MCF 10A (cell line): ENCODE measurements at regions of chr2 and their contacts with region 1.

Region 1: GRCh38 chr2:7203055-7203467 is 285.8 kb downstream of the RNF144A start:
- DNase-seq: peak; percentile 61
- H3K4me3 Mint-ChIP-seq: no peak overlapping the region
- H3K27ac Mint-ChIP-seq: no peak overlapping the region
- H3K4me1 Mint-ChIP-seq: no peaks in the 10 kb centered on the region
- H3K27me3 Mint-ChIP-seq: no peaks in the 10 kb centered on the region
- CTCF ChIP-seq: peak; percentile 78

Region 2: GRCh38 chr2:6968319-6969100 is 234.6 kb before region 1 on chr2:
- CTCF ChIA-PET with region 1: no interaction called
- POLR2A ChIA-PET with region 1: no interaction called
- intact Hi-C with region 1: no loop called
- DNase-seq: no peak
- H3K4me3 Mint-ChIP-seq: no peak overlapping the region
- H3K27ac Mint-ChIP-seq: no peak overlapping the region
- H3K4me1 Mint-ChIP-seq: no peaks in the 10 kb centered on the region
- H3K27me3 Mint-ChIP-seq: peaks cover 5% of the 10 kb centered on the region
- CTCF ChIP-seq: no peak

Region 3: DNA sequence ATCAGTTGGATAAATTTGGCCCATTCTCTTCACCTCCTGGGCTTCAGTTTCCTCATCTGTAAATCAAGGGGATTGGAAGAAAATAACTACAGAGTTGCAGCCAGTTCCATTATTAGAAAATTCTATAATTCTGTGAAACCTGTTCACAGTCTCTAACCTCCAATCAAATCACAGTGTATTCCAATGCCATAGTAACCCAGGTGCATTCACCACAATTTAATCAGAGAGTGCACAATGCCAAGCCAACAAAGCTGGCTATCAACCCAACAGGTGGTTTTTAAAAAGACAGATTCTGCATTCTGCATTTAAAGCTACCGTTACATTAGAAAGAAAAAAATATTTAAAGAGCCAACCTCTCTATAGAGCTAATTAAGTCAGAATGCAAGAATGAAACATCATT is 22.8 kb after region 1 on chr2:
- CTCF ChIA-PET with region 1: interaction called, 10 read pairs
- POLR2A ChIA-PET with region 1: no interaction called
- intact Hi-C with region 1: no loop called
- DNase-seq: no peak
- H3K4me3 Mint-ChIP-seq: no peak overlapping the region
- H3K27ac Mint-ChIP-seq: no peak overlapping the region
- H3K4me1 Mint-ChIP-seq: no peaks in the 10 kb centered on the region
- H3K27me3 Mint-ChIP-seq: no peaks in the 10 kb centered on the region
- CTCF ChIP-seq: no peak

Region 4: DNA sequence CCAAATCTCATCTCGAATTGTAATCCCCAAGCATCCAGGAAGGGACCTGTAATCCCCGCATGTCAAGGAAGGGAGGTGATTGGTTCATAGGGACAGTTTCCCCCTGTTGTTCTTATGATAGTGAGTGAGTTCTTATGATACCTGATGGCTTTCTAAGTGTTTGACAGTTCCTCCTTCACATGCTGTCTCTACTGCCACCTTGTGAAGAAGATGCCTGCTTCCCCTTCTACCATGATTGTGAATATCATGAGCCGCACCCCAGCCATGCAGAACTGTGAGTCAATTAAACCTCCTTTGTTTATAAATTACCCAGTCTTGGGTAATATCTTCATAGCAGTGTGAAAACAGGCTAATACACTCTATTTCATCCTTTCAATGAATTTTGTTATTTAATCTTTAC is 160.8 kb after region 1 on chr2:
- CTCF ChIA-PET with region 1: no interaction called
- POLR2A ChIA-PET with region 1: no interaction called
- intact Hi-C with region 1: loop called (anchors 1 kb)
- DNase-seq: peak; percentile 42
- H3K4me3 Mint-ChIP-seq: no peak overlapping the region
- H3K27ac Mint-ChIP-seq: no peak overlapping the region
- H3K4me1 Mint-ChIP-seq: no peaks in the 10 kb centered on the region
- H3K27me3 Mint-ChIP-seq: no peaks in the 10 kb centered on the region
- CTCF ChIP-seq: no peak

Region 5: DNA sequence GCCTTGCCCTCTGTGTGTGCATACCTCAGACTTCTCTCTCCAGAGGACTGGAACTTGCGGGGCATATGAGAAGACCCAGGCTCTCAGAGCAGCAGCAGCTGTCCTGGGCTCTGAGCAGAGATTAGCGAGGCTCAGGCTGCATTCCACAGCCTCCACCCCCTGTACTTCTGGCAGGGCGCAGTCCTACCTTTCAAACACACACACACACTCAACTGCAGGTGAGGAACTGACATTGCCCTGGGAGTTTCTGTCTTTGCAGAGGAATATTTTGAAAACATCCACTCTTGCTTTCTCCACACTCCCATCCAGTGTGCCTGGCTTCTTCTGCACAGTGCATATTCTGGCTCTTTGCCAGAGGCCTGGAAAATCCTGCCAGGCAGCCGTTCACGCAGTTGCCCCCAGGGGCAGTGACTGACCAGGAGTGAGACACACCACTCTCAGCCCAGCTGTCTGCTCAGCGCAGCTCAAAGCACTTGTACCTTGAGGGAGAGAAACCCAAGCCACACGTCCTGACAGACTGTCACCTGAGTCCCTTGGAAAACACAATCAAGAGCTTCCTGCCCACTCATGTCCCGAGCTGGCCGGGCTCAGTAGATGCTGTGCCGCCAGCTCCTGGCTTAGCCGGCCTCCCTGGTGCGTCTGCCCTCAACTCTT is 175.0 kb after region 1 on chr2:
- CTCF ChIA-PET with region 1: interaction called, 3 read pairs
- POLR2A ChIA-PET with region 1: no interaction called
- intact Hi-C with region 1: loop called (anchors 5 kb)
- DNase-seq: peak; percentile 57
- H3K4me3 Mint-ChIP-seq: no peak overlapping the region
- H3K27ac Mint-ChIP-seq: no peak overlapping the region
- H3K4me1 Mint-ChIP-seq: no peaks in the 10 kb centered on the region
- H3K27me3 Mint-ChIP-seq: no peaks in the 10 kb centered on the region
- CTCF ChIP-seq: no peak

Region 6: DNA sequence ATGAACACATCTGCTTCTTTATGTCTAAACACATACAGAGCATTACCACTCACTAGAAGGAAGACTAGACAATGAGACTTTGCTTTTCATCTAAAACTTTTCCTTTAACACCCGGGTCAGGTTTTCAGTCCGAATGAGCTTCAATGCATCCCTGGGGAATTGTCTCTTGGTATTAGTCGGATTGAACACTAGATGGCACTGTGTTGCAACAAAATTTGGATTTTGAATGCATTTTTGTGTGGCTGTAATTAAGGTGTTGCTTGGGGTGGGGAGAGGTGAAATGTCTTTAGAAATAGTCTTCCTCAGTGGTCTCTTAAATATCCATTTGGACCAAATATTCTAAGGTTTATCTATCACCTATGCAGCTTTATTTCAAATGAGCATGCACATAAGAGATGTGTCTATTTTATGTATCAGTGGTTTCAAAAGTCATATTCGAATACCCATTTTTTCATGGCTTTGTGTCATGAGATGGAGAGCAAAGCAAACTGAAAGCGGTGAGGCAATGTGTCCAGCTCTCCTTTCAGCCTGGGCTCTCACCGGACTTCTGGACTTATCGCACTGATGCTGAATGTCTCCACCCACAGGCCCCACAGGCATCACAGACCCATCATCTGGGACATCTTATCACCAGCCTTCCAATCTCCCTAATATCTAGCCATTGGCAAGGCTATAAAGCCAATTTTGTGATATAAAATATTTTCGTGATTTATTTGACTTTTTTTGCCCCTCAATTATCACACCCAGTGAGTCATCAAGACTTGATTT is 224.4 kb after region 1 on chr2:
- CTCF ChIA-PET with region 1: interaction called, 6 read pairs
- POLR2A ChIA-PET with region 1: no interaction called
- intact Hi-C with region 1: loop called (anchors 5 kb)
- DNase-seq: peak; percentile 70
- H3K4me3 Mint-ChIP-seq: no peak overlapping the region
- H3K27ac Mint-ChIP-seq: no peak overlapping the region
- H3K4me1 Mint-ChIP-seq: no peaks in the 10 kb centered on the region
- H3K27me3 Mint-ChIP-seq: peaks cover 31% of the 10 kb centered on the region
- CTCF ChIP-seq: peak; percentile 70

Region 7: DNA sequence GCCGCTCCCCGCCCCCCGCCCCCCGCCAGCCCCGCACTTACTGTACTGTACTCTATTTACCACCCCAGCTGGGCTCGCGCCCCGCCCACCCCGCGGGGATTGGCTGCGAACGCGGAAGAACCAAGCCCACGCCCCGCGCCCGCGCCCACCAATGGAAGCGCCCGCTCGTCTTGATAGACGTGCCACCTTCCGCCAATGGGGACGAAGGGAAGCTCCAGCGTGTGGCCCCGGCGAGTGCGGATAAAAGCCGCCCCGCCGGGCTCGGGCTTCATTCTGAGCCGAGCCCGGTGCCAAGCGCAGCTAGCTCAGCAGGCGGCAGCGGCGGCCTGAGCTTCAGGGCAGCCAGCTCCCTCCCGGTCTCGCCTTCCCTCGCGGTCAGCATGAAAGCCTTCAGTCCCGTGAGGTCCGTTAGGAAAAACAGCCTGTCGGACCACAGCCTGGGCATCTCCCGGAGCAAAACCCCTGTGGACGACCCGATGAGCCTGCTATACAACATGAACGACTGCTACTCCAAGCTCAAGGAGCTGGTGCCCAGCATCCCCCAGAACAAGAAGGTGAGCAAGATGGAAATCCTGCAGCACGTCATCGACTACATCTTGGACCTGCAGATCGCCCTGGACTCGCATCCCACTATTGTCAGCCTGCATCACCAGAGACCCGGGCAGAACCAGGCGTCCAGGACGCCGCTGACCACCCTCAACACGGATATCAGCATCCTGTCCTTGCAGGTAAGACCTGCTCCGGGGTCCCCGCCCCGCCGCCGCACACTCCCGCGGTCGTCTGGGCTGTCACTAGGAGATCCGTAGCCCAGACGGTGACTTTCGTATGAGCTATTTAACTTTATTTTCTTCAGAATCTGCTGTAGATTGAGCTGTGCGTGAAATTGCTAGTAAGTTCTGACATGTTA is 1479.0 kb after region 1 on chr2 and contains the start of gene ID2:
- CTCF ChIA-PET with region 1: interaction called, 5 read pairs
- POLR2A ChIA-PET with region 1: no interaction called
- intact Hi-C with region 1: loop called (anchors 1 kb)
- DNase-seq: peak; percentile 99
- H3K4me3 Mint-ChIP-seq: peak within 1 kb of the TSS; percentile 75
- H3K27ac Mint-ChIP-seq: no peak within 1 kb of the TSS
- H3K4me1 Mint-ChIP-seq: peaks cover 28% of the 10 kb centered on the region
- H3K27me3 Mint-ChIP-seq: peaks cover under 1% of the 10 kb centered on the region
- CTCF ChIP-seq: no peak
- total RNA-seq, gene ID2: 0.54 and 2.0 TPM in 2 replicates